Endothelial cell of umbilical vein (primary cell): ENCODE measurements at regions of chr2 and their contacts with region 1.

Region 1: DNA sequence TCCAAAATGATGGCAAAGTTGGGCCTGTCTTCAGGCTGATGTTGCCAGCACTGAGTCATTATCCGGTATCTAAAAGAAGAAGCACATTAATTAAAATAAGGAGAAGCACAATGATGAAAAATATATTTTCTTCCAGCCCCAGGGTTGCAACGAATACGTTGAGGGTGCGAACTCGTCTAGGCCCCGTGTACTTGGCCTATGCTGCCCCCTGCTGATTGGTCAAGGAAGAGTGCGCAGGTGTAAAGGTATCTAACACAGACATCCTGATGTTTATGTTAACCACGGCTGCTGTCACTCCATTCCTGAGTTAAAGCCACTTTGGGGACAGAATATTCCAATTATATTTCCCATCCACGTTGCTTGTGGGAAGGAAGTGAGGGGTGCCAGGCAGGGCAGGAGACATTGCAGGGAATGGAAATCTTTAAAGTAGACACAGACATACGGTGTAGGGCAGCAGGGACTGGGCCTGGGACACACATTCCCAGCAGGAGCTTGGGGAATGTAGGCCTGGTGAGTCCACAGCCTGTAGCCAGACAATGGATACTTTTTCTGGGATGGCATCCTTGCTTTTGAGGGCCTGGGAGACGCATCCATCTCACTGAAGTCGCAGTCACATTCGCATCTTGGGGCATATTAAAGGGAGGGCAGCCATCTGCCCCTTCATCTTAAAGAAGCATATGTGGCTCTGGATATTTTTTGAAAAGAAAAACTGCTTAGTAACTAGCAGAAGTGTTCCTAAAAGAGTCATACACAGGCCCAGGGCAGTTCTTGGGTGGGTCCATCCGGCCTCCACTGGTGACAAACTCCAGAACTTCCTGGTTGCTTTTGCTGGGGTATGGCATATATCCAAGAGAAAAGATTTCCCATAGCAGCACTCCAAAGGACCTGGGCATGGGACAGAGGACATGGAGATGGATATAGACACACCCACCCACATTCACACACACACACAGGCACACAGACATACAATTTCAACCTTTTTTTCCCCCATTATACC is 81.9 kb downstream of the CLIP4 start:
- DNase-seq: peak; percentile 56
- H3K4me3 ChIP-seq: no peak overlapping the region
- H3K27ac ChIP-seq: no peak overlapping the region
- H3K4me1 ChIP-seq: peaks cover 6% of the 10 kb centered on the region
- H3K27me3 ChIP-seq: no peaks in the 10 kb centered on the region
- CTCF ChIP-seq: peak; percentile 77
- POLR2A ChIP-seq: no peak

Region 2: DNA sequence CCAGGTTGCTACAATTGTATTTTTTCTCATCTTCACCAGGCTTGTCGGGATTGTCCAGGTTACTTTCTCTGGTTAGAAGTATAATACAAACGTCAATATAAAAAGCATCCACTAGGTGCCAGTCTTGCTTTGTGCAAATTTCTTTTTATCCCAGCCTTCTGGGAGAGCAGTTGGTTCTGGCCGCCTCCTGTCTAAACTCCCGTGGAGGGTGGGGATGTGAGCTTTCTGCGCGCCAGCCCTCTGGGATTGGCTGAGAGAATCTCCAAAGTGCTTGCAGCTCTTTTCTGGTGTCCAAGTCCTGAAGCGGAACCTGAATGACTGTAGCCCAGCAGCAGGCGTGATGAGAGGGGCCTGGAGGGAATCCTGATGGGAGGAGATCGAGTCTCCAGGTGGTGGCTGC is 238.4 kb before region 1 on chr2:
- CTCF ChIA-PET with region 1: interaction called, 8 read pairs
- POLR2A ChIA-PET with region 1: no interaction called
- dilution Hi-C with region 1: no loop called
- intact Hi-C with region 1: loop called (anchors 1 kb)
- DNase-seq: peak; percentile 66
- H3K4me3 ChIP-seq: no peak overlapping the region
- H3K27ac ChIP-seq: no peak overlapping the region
- H3K4me1 ChIP-seq: peaks cover 7% of the 10 kb centered on the region
- H3K27me3 ChIP-seq: no peaks in the 10 kb centered on the region
- CTCF ChIP-seq: peak; percentile 38 to 58
- POLR2A ChIP-seq: no peak

Region 3: GRCh38 chr2:29053670-29054400 is 143.3 kb before region 1 on chr2:
- CTCF ChIA-PET with region 1: no interaction called
- POLR2A ChIA-PET with region 1: no interaction called
- dilution Hi-C with region 1: no loop called
- intact Hi-C with region 1: loop called (anchors 5 kb)
- DNase-seq: no peak
- H3K4me3 ChIP-seq: no peak overlapping the region
- H3K27ac ChIP-seq: no peak overlapping the region
- H3K4me1 ChIP-seq: no peaks in the 10 kb centered on the region
- H3K27me3 ChIP-seq: no peaks in the 10 kb centered on the region
- CTCF ChIP-seq: no peak
- POLR2A ChIP-seq: no peak

Region 4: GRCh38 chr2:29115797-29116781 is 81.0 kb before region 1 on chr2:
- CTCF ChIA-PET with region 1: interaction called, 3 read pairs
- POLR2A ChIA-PET with region 1: interaction called, 3 read pairs
- dilution Hi-C with region 1: no loop called
- intact Hi-C with region 1: loop called (anchors 5 kb)
- DNase-seq: peak; percentile 68
- H3K4me3 ChIP-seq: peak overlapping the region; percentile 63 to 91 (median 91)
- H3K27ac ChIP-seq: peak overlapping the region; percentile 80
- H3K4me1 ChIP-seq: peaks cover 31% of the 10 kb centered on the region
- H3K27me3 ChIP-seq: no peaks in the 10 kb centered on the region
- CTCF ChIP-seq: no peak
- POLR2A ChIP-seq: no peak